Left cardiac atrium (tissue), 4 donors: ENCODE measurements at regions of chr14 and their contacts with region 1.

Region 1: DNA sequence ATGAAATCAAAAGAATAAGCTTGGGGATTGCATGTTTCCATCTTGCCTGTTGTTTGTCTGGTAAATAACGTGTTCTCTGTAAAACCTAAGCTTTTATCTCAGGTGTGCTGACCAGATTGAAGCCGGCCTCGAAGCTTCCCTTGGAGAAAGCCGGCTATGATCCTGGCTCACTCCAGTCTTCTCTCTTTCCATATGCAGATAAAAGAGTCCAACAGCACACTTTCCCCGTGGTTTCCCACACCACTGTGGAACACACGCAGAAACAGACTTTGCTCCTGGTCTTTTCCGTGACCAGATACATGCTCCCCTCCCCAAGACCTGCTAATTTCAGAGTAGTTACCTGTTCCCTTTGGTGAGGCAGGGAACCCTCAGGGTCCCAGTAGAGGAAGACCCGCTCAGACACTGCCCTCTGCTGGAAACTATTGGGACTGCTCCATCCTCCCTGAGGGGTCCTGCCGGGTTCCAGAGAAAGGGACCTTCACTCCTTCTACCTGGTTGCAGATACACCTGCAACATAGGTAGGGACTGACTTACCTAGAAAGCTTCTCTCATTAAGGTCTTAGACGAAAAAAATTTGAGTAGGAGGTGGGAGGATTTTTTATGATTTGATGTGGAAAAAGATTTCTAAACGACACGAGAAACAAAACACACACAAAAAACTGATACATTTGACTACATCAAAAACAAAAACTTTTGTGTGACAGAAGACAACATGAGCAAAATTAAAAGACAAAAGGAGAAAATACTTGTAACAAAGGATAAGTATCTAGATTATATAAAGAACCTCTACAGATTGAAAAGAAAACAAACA is 415.5 kb upstream of the CCDC196 start:
- DNase-seq: peak; percentile 46
- ATAC-seq: peak; percentile 47 to 55

Region 2: DNA sequence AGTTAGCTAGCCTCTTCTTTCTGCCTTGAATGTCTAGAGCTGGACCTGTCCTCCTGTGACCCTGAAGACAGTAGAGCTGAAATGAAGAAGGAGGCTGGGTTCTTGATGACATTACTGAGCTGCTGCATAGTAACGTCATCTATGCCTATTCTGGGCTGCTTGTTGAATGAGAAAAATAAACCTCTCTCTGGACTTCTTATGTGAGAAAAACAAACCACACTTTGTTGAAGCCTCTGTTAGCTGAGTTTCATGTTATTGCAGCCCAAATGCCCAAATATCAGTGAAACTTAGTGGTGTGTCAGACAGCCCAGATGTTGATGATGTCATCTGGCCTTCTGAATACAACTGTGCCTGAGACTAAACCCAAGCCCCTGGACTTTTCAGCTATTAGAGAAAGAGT is 901.4 kb before region 1 on chr14:
- intact Hi-C with region 1: loop called in 1 of 2 experiments (anchors 5 kb)
- DNase-seq: no peak
- ATAC-seq: peak in 1 of 2 donors; percentile 78

Region 3: GRCh38 chr14:65900164-65900563 is 170.6 kb before region 1 on chr14:
- intact Hi-C with region 1: no loop called
- DNase-seq: no peak
- ATAC-seq: no peak

Region 4: DNA sequence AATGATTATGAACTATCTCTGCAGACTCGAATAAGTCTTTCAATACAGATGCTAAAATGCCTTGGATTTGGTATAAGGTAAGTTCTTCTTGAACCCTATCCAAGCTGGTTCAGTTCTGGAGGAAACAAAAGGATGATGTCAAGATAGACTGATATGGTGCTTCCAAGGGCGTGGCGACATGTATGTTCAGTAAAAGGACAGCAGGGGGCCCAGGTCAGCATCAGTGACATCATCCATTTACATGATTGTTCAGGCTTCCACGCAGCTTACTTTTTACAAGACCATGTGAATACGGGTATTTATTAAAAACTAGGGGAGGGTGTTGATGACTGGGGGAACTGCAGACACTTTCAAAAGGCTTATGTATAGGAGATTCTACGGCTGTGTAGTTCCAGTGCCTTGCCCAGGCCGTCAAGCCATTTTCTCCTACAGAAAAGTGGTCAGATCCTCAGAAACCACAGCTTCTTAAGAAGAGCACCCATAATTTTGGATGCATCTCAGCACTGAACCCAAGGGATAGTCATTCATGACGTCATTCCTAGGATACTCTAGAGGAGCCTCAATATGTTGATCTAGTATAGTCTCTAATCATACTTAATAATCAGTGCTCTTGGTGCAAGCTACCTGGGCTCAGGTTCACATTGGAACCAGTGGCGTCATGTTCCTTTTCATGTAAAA is 130.5 kb before region 1 on chr14:
- intact Hi-C with region 1: loop called in 1 of 2 experiments (anchors 5 kb)
- DNase-seq: no peak
- ATAC-seq: no peak

Region 5: DNA sequence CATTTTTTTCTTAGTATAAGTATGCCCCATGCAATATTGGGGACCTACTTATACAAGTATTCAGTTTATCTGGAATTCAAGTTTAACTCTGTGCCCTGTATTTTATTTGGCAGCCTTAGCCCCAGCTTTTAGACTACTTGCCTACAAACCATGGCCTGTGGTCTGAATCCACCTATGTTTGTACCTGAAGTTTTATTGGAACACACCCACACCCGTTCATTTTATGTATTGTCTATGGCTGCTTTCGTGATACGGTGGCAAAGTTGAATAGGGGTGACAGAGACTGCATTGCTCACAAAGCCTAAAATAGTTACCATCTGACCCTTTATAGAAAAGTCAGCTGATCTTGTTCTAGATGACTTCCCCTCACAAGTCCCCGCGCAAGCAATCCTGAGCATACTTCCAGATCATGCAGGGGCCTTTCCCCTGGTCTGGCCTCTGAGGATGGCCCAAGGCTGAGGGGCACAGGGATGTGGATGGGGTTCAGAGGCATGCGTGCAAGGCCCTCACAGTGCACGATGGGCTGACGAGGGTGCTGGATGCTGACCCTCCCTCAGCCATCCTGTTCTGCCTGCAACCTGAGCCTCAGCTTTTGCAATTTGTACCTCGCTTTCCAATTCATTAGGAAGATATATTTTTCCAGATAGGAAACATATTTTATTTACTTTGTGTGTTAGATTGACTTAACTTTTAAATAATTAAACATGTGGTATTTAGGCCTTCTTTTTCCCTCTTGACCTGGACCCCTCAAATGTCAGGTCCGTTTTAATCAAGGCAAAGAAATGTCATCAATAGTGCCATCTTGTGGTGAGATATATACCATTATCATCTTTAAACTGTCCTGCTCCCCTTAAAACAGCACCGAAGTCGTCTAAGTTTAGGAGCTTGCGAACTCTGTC is 111.8 kb before region 1 on chr14:
- intact Hi-C with region 1: loop called in 1 of 2 experiments (anchors 2 kb)
- DNase-seq: no peak
- ATAC-seq: peak; percentile 40 to 55

Region 6: GRCh38 chr14:66025779-66026178 is 44.9 kb before region 1 on chr14:
- intact Hi-C with region 1: no loop called
- DNase-seq: no peak
- ATAC-seq: no peak

Region 7: DNA sequence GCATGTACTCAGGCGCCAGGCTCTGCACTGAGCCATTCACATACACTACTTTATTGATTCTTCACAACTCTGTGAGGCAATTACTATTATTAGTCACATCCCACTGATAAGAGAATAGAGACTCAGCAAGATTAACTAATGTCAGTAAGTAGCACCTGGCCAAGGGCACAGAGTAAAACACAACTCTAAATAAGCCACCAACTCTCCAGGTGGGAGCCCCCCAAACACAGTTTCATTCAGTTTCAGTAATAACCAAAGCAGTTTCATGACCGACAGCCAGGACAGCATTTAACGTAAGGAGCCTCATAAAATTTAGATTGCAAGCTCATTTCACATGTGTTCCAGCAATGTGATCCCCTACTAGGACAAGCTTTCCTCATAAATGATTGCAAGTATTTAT is 92.3 kb after region 1 on chr14:
- intact Hi-C with region 1: no loop called
- DNase-seq: no peak
- ATAC-seq: no peak